Natural killer cell (primary cell): ENCODE measurements at regions of chr18 and their contacts with region 1.

Region 1: GRCh38 chr18:75227535-75228296 is 17.1 kb downstream of the TSHZ1 start:
- DNase-seq: no peak
- ATAC-seq: peak; percentile 39 to 51 (median 46)
- H3K4me3 ChIP-seq: no peak overlapping the region
- H3K4me3 Mint-ChIP-seq: peak overlapping the region; percentile 38
- H3K27ac ChIP-seq: no peak overlapping the region
- H3K27ac Mint-ChIP-seq: peak overlapping the region; percentile 67 to 88
- H3K4me1 ChIP-seq: peaks cover 48% of the 10 kb centered on the region
- H3K4me1 Mint-ChIP-seq: peaks cover 57 to 66% of the 10 kb centered on the region in 2 donors
- H3K27me3 ChIP-seq: no peaks in the 10 kb centered on the region
- H3K27me3 Mint-ChIP-seq: no peaks in the 10 kb centered on the region
- CTCF ChIP-seq: no peak

Region 2: DNA sequence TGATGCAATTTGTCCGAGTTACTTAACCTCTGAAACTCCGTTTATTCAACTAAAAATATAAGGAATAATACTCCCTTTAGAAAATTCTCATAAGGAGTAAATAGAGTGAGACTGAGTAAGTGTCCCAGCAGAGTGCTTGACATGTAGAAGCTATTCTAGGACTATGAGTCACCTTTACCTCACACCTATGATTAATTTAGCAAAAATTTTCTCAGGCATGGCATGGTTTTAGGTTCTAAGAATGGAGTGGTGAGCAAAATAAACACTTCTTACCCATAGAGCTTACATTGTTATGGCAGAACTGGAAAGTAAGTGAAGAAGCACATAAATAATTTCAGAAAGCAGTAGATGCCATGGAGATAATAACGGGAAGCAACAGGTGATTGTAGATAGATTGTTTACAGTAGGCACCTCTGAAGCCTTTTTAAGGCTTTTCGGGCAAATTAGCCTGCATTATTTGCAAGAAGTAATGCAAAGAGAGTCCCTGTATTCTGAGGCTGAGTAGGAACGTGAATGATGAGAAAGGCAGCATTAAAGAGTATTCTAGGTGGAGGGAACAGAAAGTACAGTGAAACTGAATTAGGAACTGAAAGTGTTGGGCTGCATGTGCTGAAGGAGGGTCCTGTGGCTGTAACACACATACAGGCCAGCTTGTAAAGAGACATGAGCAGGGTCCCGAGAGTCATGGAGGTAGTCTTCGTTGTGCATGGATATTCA is 420.9 kb before region 1 on chr18:
- intact Hi-C with region 1: no loop called
- DNase-seq: no peak
- ATAC-seq: no peak
- H3K4me3 ChIP-seq: no peak overlapping the region
- H3K4me3 Mint-ChIP-seq: no peak overlapping the region
- H3K27ac ChIP-seq: no peak overlapping the region
- H3K27ac Mint-ChIP-seq: no peak overlapping the region
- H3K4me1 ChIP-seq: no peaks in the 10 kb centered on the region
- H3K4me1 Mint-ChIP-seq: peaks cover 0 to 5% of the 10 kb centered on the region in 2 donors
- H3K27me3 ChIP-seq: no peaks in the 10 kb centered on the region
- H3K27me3 Mint-ChIP-seq: no peaks in the 10 kb centered on the region
- CTCF ChIP-seq: no peak

Region 3: GRCh38 chr18:75154997-75155396 is 72.7 kb before region 1 on chr18:
- intact Hi-C with region 1: no loop called
- DNase-seq: no peak
- ATAC-seq: no peak
- H3K4me3 ChIP-seq: no peak overlapping the region
- H3K4me3 Mint-ChIP-seq: no peak overlapping the region
- H3K27ac ChIP-seq: no peak overlapping the region
- H3K27ac Mint-ChIP-seq: no peak overlapping the region
- H3K4me1 ChIP-seq: no peaks in the 10 kb centered on the region
- H3K4me1 Mint-ChIP-seq: no peaks in the 10 kb centered on the region
- H3K27me3 ChIP-seq: no peaks in the 10 kb centered on the region
- H3K27me3 Mint-ChIP-seq: peaks cover 20 to 33% of the 10 kb centered on the region in 2 donors
- CTCF ChIP-seq: no peak

Region 4: DNA sequence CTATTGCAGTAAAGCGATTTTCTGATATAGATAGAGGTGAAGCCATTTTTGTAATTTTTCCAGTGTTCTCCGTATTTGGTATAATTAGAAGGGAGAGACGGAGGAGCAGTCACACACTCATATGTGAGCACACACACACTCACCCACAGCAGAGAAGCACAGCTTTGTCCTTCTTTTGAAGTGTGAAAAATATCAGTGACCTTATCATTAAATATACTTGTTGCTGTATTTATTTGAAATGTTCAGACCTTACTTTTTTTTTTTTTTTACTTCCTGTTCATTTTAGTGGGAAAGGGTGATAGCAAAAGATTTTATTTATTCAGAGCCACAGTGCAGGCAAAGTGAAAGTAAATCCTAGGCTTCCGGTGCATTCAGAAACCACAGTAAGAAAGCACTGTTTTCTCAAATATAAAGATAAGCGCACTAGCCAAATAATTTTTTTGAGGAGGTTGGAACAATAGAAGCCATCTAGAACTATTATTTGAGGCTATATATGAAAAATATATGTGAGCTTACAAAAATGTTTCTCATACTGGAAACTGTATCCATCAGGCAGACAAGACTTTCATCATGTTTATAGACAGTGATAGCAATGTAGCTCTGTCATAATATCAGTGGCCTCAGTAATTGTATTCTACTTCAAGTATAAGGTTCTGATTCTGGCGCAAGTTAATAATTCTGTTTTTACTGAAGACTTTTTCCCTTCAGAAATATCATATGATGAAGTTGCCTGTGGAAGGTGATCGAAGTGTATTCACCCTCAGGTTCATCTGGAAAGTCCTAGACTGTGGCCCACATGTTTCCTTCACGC is 20.1 kb after region 1 on chr18:
- intact Hi-C with region 1: loop called (anchors 2 kb)
- DNase-seq: peak in 1 of 2 donors; percentile 69
- ATAC-seq: peak; percentile 22 to 42 (median 35)
- H3K4me3 ChIP-seq: peak overlapping the region; percentile 35
- H3K4me3 Mint-ChIP-seq: peak overlapping the region; percentile 92
- H3K27ac ChIP-seq: peak overlapping the region; percentile 71
- H3K27ac Mint-ChIP-seq: peak overlapping the region; percentile 92 to 98
- H3K4me1 ChIP-seq: peaks cover 47% of the 10 kb centered on the region
- H3K4me1 Mint-ChIP-seq: peaks cover 57 to 78% of the 10 kb centered on the region in 2 donors
- H3K27me3 ChIP-seq: no peaks in the 10 kb centered on the region
- H3K27me3 Mint-ChIP-seq: no peaks in the 10 kb centered on the region
- CTCF ChIP-seq: no peak